Tibial artery (tissue), 4 donors: ENCODE measurements at regions of chr7 and their contacts with region 1.

Region 1: GRCh38 chr7:6658618-6659341 is 21.7 kb downstream of the ZNF316 start:
- DNase-seq: no peak
- H3K4me3 ChIP-seq: no peak overlapping the region
- H3K27ac ChIP-seq: no peak overlapping the region
- H3K4me1 ChIP-seq: peaks cover 0 to 1% (median 1%) of the 10 kb centered on the region in 4 donors
- H3K27me3 ChIP-seq: peaks cover 0 to 2% of the 10 kb centered on the region in 2 donors
- CTCF ChIP-seq: no peak

Region 2: DNA sequence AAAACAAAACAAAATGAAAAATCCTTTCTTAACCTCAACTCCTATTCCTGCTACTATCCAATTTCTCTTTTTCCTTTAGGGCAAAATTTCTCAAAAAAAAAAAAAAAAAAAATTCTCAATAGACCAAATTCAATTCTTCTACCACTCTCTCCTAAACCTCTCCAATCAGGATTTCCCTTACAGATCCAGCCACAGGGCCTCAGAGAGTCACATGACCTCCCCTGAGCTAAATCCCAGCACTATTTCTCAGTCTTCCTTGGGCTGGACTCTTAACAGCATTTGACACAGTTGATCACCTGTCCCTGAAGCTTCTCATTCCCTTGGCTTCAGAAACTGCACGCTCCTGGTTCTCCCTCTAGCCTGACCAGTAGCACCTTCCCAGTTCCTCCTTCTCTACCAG is 43.1 kb after region 1 on chr7:
- intact Hi-C with region 1: no loop called
- DNase-seq: no peak
- H3K4me3 ChIP-seq: no peak overlapping the region
- H3K27ac ChIP-seq: no peak overlapping the region
- H3K4me1 ChIP-seq: peaks cover 0 to 30% (median 24%) of the 10 kb centered on the region in 4 donors
- H3K27me3 ChIP-seq: no peaks in the 10 kb centered on the region
- CTCF ChIP-seq: no peak

Region 3: DNA sequence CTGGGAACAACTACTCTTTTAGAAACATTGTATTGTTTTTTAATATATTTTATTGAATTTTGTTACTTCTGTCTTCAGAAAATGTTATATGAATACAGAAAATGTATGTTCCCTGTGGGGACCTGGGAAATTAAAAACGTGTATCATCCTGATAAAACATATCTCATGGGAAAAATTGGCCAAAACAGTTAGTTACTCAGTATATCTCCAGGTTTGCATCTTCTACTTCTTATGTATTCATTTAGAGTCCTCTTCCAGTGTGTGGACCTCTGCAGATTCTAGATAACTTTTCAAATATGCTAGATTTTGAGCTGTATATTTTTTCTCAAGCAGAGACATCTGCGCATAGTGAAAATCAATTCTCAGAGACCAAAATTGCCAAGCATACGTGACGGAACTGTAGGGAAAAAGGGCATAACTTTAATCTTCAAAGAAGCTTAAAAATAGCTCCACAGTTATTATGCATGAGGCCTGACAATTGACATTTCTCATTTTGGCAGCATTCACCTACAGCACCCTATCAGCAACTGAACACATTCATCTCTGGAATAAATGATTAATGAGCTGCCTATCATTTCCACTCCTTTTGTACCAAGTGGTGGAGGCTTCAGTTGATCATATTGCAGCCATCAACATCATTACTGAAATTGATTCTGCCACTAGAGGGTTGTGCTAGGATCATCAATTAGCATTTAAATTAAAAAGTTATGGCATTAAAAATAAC is 955.4 kb after region 1 on chr7:
- intact Hi-C with region 1: loop called (anchors 5 kb)
- DNase-seq: no peak
- H3K4me3 ChIP-seq: no peak overlapping the region
- H3K27ac ChIP-seq: no peak overlapping the region
- H3K4me1 ChIP-seq: no peaks in the 10 kb centered on the region
- H3K27me3 ChIP-seq: no peaks in the 10 kb centered on the region
- CTCF ChIP-seq: no peak